ENCODE measurements at regions of chr1 and their contacts with region 1.

Region 1: GRCh38 chr1:113042285-113043143 is 30.5 kb upstream of the LRIG2 start:
- DNase-seq: peak; percentile 93
- H3K4me3 ChIP-seq: no peak overlapping the region
- H3K27ac ChIP-seq: no peak overlapping the region
- H3K4me1 ChIP-seq: peaks cover 8 to 13% (median 13%) of the 10 kb centered on the region in 4 donors
- H3K27me3 ChIP-seq: no peaks in the 10 kb centered on the region
- CTCF ChIP-seq: peak; percentile 68 to 75 (median 74)
- EP300 ChIP-seq: no peak
- POLR2A ChIP-seq: no peak

Region 2: DNA sequence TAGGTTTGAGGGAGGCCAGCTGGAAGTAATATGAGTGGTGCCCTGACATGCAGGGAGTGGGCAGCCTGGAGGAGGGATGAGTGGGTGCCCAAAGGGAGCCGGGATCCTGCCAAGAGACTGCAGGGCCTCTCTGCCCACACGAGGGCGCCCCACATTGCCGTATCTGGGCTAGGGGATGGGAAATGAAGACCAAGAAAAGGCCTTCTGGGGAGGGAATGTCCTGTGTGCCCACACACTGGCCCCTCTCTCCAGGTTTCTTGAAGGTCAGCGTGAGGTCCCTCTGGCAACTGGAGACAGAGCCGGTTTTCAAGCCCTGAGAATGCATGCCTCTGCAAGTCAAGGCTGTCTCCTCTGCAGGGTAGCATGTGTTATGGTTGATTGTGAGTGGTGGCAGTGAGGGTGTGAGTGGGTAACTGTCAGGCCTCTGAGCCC is 233.2 kb before region 1 on chr1:
- intact Hi-C with region 1: loop called (anchors 5 kb)
- DNase-seq: no peak
- H3K4me3 ChIP-seq: no peak overlapping the region
- H3K27ac ChIP-seq: no peak overlapping the region
- H3K4me1 ChIP-seq: no peaks in the 10 kb centered on the region
- H3K27me3 ChIP-seq: no peaks in the 10 kb centered on the region
- CTCF ChIP-seq: peak; percentile 53 to 76 (median 60)
- EP300 ChIP-seq: no peak
- POLR2A ChIP-seq: no peak

Region 3: GRCh38 chr1:112833806-112834205 is 208.7 kb before region 1 on chr1:
- intact Hi-C with region 1: no loop called
- DNase-seq: no peak
- H3K4me3 ChIP-seq: no peak overlapping the region
- H3K27ac ChIP-seq: no peak overlapping the region
- H3K4me1 ChIP-seq: no peaks in the 10 kb centered on the region
- H3K27me3 ChIP-seq: no peaks in the 10 kb centered on the region
- CTCF ChIP-seq: no peak
- EP300 ChIP-seq: no peak
- POLR2A ChIP-seq: no peak

Region 4: GRCh38 chr1:112882271-112882744 is 160.2 kb before region 1 on chr1:
- intact Hi-C with region 1: loop called (anchors 2 kb)
- DNase-seq: no peak
- H3K4me3 ChIP-seq: no peak overlapping the region
- H3K27ac ChIP-seq: peak overlapping the region in 1 of 4 donors; percentile 7
- H3K4me1 ChIP-seq: peaks cover 3 to 10% (median 8%) of the 10 kb centered on the region in 4 donors
- H3K27me3 ChIP-seq: no peaks in the 10 kb centered on the region
- CTCF ChIP-seq: no peak
- EP300 ChIP-seq: no peak
- POLR2A ChIP-seq: no peak

Region 5: GRCh38 chr1:113191579-113192076 is 149.1 kb after region 1 on chr1:
- intact Hi-C with region 1: no loop called
- DNase-seq: no peak
- H3K4me3 ChIP-seq: no peak overlapping the region
- H3K27ac ChIP-seq: no peak overlapping the region
- H3K4me1 ChIP-seq: no peaks in the 10 kb centered on the region
- H3K27me3 ChIP-seq: no peaks in the 10 kb centered on the region
- CTCF ChIP-seq: no peak
- EP300 ChIP-seq: no peak
- POLR2A ChIP-seq: no peak